H1 (cell line): ENCODE measurements at regions of chr9 and their contacts with region 1.

Region 1: GRCh38 chr9:121498150-121498486 is 1.5 kb downstream of the GGTA1 start:
- DNase-seq: no peak
- H3K4me3 ChIP-seq: peak overlapping the region in 2 of 4 experiments; percentile 53 to 64; a peak in 4 of 8 replicates
- H3K27ac ChIP-seq: no peak overlapping the region
- H3K4me1 ChIP-seq: peaks cover 0 to 20% (median 4%) of the 10 kb centered on the region in 4 experiments; a peak in 6 of 7 replicates
- H3K27me3 ChIP-seq: peaks cover 20 to 45% (median 36%) of the 10 kb centered on the region in 4 experiments
- CTCF ChIP-seq: peak in 2 of 3 experiments; percentile 64 to 81; a peak in 3 of 4 replicates
- EP300 ChIP-seq: no peak
- POLR2A ChIP-seq: no peak
- RAD21 ChIP-seq: peak; percentile 32 to 57

Region 2: DNA sequence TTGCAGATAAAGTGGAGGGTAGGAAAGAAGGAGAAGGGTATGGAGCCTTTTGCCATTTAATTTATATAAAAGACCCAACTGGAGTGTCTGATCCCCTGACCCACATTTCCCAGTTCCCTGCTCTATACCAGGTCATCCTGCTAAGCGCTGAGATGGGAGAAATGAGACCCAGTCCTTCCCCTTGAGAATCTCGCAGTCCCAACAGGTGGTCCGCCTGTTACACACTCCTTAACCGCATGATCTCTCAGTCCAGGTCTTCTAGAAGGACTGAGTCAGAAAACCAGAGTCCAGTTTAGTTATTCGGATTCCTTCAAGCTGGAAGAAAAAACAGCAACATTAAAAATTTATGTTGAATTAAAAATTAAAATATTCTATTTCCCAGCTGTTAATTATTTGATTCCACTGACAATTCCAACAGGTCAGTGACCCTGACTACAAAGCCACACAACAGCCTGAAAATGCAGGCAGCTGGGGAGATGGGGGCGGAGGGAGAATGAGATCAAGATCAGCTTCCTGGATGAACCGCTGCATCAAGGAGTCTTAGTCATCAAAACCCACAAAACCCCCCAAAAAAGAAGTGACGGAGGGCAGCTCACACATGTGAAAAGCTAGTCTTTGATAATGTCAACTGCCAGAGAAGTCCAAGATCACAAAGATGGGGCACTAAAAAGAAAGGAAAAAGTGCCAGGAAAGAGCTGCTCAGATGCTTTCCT is 42.4 kb before region 1 on chr9:
- CTCF ChIA-PET with region 1: interaction called, 12 read pairs
- POLR2A ChIA-PET with region 1: interaction called, 3 read pairs
- DNase-seq: no peak
- H3K4me3 ChIP-seq: no peak overlapping the region
- H3K27ac ChIP-seq: no peak overlapping the region
- H3K4me1 ChIP-seq: peaks cover 0 to 6% (median 2%) of the 10 kb centered on the region in 4 experiments; a peak in 4 of 7 replicates
- H3K27me3 ChIP-seq: no peaks in the 10 kb centered on the region
- CTCF ChIP-seq: no peak
- EP300 ChIP-seq: no peak
- POLR2A ChIP-seq: no peak
- RAD21 ChIP-seq: no peak

Region 3: DNA sequence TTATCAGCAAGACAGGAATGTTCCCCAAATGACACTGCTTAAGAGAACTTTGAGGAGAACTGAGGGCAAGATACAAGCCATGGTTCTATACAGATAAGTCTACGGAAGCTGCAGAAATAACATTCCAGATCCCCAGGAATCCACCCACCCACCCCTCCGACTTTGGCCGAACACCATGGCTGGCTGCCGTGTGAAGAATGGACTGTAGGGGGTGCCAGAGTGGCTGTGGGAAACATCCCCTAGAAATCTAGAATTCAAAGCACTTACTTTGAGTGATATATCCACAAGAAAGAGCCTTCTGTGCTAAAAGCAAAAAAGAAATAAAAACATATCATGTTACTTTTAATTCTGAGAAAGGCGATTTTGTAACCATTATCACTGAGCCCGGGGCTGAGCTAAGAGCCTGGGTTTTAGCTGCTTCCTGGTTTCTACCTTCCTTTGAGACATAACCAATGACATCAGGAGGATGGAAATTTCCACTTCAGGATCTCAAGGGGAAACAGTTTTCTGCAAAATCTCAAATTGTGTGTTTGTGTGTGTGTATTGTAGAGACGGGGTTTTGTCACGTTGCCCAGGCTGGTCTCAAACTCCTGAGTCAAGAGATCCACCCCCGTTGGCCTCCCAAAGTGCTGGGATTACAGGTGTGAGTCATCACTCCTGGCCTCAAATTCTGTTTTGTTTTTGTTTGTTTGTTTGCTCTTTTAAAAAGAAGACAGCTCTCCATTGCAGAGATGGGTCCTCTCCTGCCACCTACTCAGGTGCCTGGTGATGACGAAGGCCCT is 34.9 kb before region 1 on chr9:
- CTCF ChIA-PET with region 1: interaction called, 10 read pairs
- POLR2A ChIA-PET with region 1: interaction called, 3 read pairs
- DNase-seq: peak; percentile 15 to 87
- H3K4me3 ChIP-seq: no peak overlapping the region
- H3K27ac ChIP-seq: no peak overlapping the region
- H3K4me1 ChIP-seq: peaks cover 0 to 4% (median 1%) of the 10 kb centered on the region in 4 experiments; a peak in 2 of 7 replicates
- H3K27me3 ChIP-seq: no peaks in the 10 kb centered on the region
- CTCF ChIP-seq: peak; percentile 69 to 83 (median 74)
- EP300 ChIP-seq: no peak
- POLR2A ChIP-seq: no peak
- RAD21 ChIP-seq: peak; percentile 45 to 68; a peak in 3 of 4 replicates

Region 4: DNA sequence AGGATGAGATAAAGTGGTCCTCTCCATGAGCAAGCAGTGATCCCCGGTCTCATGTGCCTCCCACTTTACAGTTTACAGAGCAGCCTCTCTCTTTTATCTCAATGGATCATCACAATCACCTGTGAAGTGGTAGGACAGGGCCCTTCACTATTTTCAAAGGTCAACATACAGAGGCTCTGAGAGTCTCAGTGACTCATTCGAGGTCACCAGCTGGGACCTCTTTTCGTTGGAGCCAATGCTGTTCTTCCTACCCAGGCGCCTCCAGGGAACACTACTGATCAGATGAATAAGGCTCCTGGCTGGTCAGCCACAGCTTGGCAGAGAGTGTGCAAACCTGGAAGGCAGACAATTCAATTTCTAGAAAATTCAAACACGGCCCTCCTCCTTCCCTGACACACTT is 15.1 kb before region 1 on chr9:
- CTCF ChIA-PET with region 1: interaction called, 38 read pairs
- POLR2A ChIA-PET with region 1: no interaction called
- DNase-seq: no peak
- H3K4me3 ChIP-seq: no peak overlapping the region
- H3K27ac ChIP-seq: no peak overlapping the region
- H3K4me1 ChIP-seq: peaks cover 4 to 6% (median 4%) of the 10 kb centered on the region in 4 experiments; a peak in 5 of 7 replicates
- H3K27me3 ChIP-seq: 0 out of 7 replicates have a peak, but pooled peaks cover 0 to 3% (median 0%) of the 10 kb centered on the region in 4 experiments
- CTCF ChIP-seq: no peak
- EP300 ChIP-seq: no peak
- POLR2A ChIP-seq: no peak
- RAD21 ChIP-seq: no peak

Region 5: DNA sequence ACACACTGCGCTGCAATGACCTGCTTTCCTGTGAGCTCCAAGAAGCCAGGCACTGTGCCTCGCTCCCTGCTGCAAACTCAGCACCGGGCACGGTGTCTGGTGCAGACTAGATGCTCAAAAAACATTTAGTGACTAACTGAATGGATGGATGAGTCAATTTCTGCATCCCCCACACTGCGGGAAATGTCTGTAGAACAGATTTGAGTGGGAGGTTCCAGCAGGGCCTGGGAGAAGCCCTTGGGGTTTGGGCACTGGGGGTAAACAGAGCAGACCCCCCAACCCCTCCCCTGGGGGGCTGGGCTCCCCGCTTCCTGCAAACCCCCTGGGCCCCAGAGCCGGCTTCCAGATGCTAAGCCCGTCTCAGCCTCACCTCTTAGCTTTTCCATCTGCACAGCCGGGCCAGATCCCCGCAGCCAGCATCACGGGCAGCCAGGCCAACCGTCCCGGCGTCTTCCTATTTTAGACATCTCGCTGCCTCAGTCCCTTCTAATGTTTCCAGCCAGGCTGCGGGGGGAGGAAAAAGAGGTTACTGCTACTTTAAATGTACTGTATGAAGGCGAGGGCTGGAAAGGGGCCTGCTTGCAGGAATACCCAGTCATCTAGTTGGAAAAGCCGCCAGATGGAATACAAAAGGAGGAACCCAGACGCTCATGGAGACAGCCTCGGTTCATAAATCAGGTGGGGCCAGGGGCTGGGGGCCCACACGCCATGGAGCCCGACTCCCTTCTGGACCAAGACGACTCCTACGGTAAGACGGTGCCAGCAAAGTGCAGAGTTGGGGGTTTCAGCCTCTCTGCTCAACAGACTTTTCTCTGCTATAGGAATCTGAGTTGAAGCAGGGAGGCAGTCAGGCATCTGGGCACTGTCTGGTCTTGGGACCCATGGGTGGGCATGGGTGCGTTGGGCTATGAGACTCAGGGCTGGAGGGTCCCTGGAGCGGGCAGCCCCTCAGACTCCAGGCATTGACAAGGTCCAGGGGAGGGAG is 68.7 kb after region 1 on chr9:
- CTCF ChIA-PET with region 1: no interaction called
- POLR2A ChIA-PET with region 1: no interaction called
- DNase-seq: no peak
- H3K4me3 ChIP-seq: no peak overlapping the region
- H3K27ac ChIP-seq: no peak overlapping the region
- H3K4me1 ChIP-seq: peaks cover 0 to 10% (median 0%) of the 10 kb centered on the region in 4 experiments; a peak in 2 of 7 replicates
- H3K27me3 ChIP-seq: no peaks in the 10 kb centered on the region
- CTCF ChIP-seq: no peak
- EP300 ChIP-seq: no peak
- POLR2A ChIP-seq: no peak
- RAD21 ChIP-seq: no peak

Region 6: GRCh38 chr9:121577166-121577565 is 79.0 kb after region 1 on chr9:
- CTCF ChIA-PET with region 1: no interaction called
- POLR2A ChIA-PET with region 1: no interaction called
- DNase-seq: no peak
- H3K4me3 ChIP-seq: no peak overlapping the region
- H3K27ac ChIP-seq: no peak overlapping the region
- H3K4me1 ChIP-seq: peaks cover 0 to 12% (median 9%) of the 10 kb centered on the region in 4 experiments; a peak in 6 of 7 replicates
- H3K27me3 ChIP-seq: no peaks in the 10 kb centered on the region; a peak in 2 of 7 replicates
- CTCF ChIP-seq: no peak
- EP300 ChIP-seq: no peak
- POLR2A ChIP-seq: no peak
- RAD21 ChIP-seq: no peak

Region 7: DNA sequence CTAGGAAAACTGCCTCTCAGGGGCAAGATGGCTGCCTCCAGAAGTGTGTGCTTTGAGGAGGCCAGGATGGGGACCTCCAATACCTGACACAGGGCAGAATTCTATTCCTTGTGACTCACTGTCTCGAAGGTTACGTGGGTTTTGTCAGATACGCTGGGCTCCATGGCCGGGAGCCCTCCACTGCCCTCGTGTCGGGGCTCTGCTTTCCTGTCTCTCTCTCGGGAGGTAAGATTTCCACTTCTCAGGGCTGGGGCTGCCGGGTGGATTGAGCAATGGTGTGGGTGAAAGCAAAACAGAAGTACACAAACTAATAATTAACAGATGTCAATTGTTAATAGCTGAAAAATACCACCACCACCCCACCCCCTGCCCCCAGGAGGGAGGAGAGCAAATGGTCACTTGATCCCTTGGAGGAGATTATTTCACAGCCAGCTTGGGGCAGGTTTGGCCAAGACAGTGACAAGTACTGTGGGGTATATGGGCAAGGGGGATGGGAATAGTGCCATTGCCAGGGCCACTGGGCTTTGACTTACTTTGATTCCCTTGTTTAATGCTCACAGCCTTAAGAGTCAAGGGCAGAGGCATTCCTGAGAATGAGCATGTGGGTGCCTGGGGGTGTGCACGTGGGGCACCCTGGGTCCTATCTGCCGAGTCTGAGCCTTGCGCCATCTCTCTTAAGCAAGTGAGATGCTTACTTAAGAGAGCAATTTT is 124.4 kb after region 1 on chr9:
- CTCF ChIA-PET with region 1: no interaction called
- POLR2A ChIA-PET with region 1: no interaction called
- DNase-seq: no peak
- H3K4me3 ChIP-seq: no peak overlapping the region
- H3K27ac ChIP-seq: no peak overlapping the region
- H3K4me1 ChIP-seq: no peaks in the 10 kb centered on the region
- H3K27me3 ChIP-seq: no peaks in the 10 kb centered on the region
- CTCF ChIP-seq: no peak
- EP300 ChIP-seq: no peak
- POLR2A ChIP-seq: no peak
- RAD21 ChIP-seq: no peak